Thyroid gland (tissue), 4 donors: ENCODE measurements at regions of chr12 and their contacts with region 1.

Region 1: GRCh38 chr12:52980693-52981423 is 25.4 kb upstream of the EIF4B start:
- DNase-seq: peak; percentile 96 to 97
- H3K4me3 ChIP-seq: no peak overlapping the region
- H3K27ac ChIP-seq: no peak overlapping the region
- H3K4me1 ChIP-seq: peaks cover 15 to 16% of the 10 kb centered on the region in 2 donors
- H3K27me3 ChIP-seq: no peaks in the 10 kb centered on the region
- CTCF ChIP-seq: peak; percentile 81 to 100 (median 97)
- POLR2A ChIP-seq: peak in 1 of 2 donors; percentile 63

Region 2: GRCh38 chr12:52139552-52140062 is 841.3 kb before region 1 on chr12:
- intact Hi-C with region 1: loop called (anchors 5 kb)
- DNase-seq: peak; percentile 70 to 76
- H3K4me3 ChIP-seq: no peak overlapping the region
- H3K27ac ChIP-seq: no peak overlapping the region
- H3K4me1 ChIP-seq: peaks cover 0 to 18% of the 10 kb centered on the region in 2 donors
- H3K27me3 ChIP-seq: no peaks in the 10 kb centered on the region
- CTCF ChIP-seq: peak in 5 of 6 experiments; percentile 43 to 90 (median 84)
- POLR2A ChIP-seq: no peak

Region 3: DNA sequence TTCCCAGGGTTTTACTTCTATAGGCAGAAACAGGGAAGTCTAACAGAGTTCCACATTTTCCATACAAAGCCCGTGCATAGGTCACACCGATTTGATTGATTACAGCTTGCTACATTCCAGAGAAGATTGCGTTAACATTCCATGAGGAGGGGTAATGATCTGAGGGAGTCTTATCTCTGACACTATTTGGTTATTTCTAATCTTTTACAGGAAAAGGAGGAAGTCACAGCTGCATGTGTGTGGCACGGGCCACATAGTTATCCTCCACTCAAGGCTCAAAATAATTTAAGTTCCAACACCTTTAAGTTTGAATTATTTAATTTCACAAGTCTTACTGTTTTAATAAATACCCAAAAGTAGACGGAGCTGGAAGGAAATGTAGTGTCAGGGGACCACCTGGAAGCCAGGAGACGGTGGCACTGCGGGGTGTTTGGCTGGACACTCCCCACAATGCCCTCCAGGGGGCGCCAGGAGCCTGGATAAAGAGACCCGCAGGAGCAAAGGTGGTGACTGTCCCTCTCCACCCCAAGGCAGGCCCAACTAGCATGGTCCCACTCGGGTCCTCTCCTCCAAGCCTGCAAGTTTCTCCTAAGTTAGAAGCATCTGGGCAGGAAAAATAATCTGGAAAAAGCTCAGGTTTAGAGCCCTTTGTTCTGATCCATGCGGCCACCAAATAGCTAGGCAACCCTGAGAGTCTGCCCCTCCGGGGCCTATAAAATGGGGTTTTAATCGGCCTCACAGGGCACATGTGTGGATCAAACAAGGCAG is 96.1 kb before region 1 on chr12:
- intact Hi-C with region 1: loop called (anchors 2 kb)
- DNase-seq: peak; percentile 81 to 84
- H3K4me3 ChIP-seq: no peak overlapping the region
- H3K27ac ChIP-seq: no peak overlapping the region
- H3K4me1 ChIP-seq: peaks cover 6% of the 10 kb centered on the region in 2 donors
- H3K27me3 ChIP-seq: no peaks in the 10 kb centered on the region
- CTCF ChIP-seq: peak; percentile 87 to 97 (median 94)
- POLR2A ChIP-seq: no peak

Region 4: DNA sequence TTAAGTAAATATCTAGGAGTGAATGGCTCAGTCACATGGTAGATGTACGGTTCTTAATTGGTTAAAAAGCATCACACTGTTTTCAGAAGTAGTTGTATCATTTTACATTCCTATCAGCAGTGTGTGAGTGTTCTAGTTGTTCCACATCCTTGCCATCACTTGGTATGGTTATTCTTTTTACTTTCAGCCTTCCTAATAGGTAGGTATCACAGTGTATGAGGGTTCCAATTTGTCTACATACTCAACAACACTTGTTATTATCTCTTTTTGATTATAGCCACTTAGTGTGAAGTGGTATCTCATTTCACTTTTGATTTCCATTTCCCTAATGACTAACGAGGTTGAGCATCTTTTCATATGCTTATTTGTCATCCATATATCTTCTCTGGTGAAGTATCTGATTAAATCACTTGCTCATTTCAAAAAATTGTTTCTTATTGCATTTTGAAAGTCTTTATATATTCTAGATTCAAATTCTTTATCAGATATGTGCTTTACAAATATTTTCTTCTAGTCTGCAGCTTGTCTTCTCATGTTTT is 101.8 kb after region 1 on chr12:
- intact Hi-C with region 1: no loop called
- DNase-seq: no peak
- H3K4me3 ChIP-seq: no peak overlapping the region
- H3K27ac ChIP-seq: no peak overlapping the region
- H3K4me1 ChIP-seq: peaks cover 18 to 19% of the 10 kb centered on the region in 2 donors
- H3K27me3 ChIP-seq: no peaks in the 10 kb centered on the region
- CTCF ChIP-seq: no peak
- POLR2A ChIP-seq: no peak